CD8-positive, alpha-beta T cell (primary cell): ENCODE measurements at regions of chr6 and their contacts with region 1.

Region 1: DNA sequence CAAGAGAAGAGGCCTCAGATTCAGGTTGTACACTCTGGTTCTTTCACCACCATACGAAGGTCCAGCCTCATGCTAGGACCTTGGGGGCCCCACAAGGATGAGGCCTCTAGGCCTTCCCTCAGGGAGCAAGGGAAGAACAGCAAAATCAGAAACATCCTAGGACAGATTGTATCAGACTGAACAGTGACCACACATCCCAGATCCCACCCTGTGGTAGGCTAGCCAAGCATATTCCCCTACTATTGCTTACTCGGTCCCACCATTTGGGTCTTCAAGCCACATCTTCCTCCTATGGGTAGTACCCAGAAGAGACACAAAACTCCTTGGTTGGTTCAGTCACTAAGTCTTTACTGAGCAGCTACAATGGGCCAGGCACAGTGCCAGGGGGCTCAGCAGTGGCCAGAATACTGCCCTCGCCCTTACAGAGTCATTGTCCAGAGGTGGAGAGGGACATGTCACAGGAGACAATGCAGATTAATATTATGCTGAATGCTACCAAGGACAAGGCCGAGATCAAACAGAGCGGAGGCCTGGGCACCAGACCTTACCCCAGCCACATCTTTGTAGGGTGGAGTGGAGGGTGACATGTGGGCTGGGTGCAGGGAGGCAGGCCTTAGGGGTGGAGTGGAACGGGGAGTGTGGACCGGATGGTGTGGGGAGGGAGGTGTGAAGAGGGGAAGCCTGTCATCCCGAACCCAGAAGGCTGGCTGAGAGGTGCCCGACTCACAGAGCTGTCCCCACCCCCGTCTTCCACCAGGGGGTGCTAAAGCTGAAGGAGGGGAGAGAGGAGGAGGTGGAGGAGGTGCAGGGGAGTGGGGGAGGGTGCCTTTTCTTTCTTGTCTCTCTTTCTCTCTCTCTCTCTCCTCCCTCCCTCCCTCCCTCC is 6.8 kb upstream of the MAPK13 start:
- DNase-seq: peak; percentile 80 to 96 (median 90)
- ATAC-seq: peak; percentile 74
- H3K4me3 ChIP-seq: no peak overlapping the region
- H3K4me3 Mint-ChIP-seq: peak overlapping the region; percentile 54
- H3K27ac ChIP-seq: peak overlapping the region; percentile 38 to 99
- H3K27ac Mint-ChIP-seq: peak overlapping the region; percentile 100
- H3K4me1 ChIP-seq: peaks cover 87% of the 10 kb centered on the region
- H3K4me1 Mint-ChIP-seq: peaks cover 89% of the 10 kb centered on the region
- H3K27me3 ChIP-seq: no peaks in the 10 kb centered on the region
- H3K27me3 Mint-ChIP-seq: no peaks in the 10 kb centered on the region
- CTCF ChIP-seq: peak; percentile 54

Region 2: GRCh38 chr6:36099872-36100483 is 23.5 kb before region 1 on chr6:
- CTCF ChIA-PET with region 1: interaction called, 88 read pairs
- POLR2A ChIA-PET with region 1: interaction called, 12 read pairs
- intact Hi-C with region 1: loop called in 1 of 2 experiments (anchors 1 kb)
- DNase-seq: peak; percentile 29 to 87 (median 56)
- ATAC-seq: peak; percentile 87
- H3K4me3 ChIP-seq: peak overlapping the region in 1 of 2 experiments; percentile 1
- H3K4me3 Mint-ChIP-seq: peak overlapping the region; percentile 64
- H3K27ac ChIP-seq: peak overlapping the region; percentile 46 to 80
- H3K27ac Mint-ChIP-seq: peak overlapping the region; percentile 91
- H3K4me1 ChIP-seq: peaks cover 45% of the 10 kb centered on the region
- H3K4me1 Mint-ChIP-seq: peaks cover 65% of the 10 kb centered on the region
- H3K27me3 ChIP-seq: no peaks in the 10 kb centered on the region
- H3K27me3 Mint-ChIP-seq: no peaks in the 10 kb centered on the region
- CTCF ChIP-seq: no peak

Region 3: DNA sequence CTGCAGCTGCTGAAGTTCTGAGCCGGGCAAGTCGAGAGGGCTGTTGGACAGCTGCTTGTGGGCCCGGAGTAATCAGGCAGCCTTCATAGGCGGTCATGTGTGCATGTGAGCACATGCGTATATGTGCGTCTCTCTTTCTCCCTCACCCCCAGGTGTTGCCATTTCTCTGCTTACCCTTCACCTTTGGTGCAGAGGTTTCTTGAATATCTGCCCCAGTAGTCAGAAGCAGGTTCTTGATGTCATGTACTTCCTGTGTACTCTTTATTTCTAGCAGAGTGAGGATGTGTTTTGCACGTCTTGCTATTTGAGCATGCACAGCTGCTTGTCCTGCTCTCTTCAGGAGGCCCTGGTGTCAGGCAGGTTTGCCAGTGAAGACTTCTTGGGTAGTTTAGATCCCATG is 14.4 kb before region 1 on chr6:
- CTCF ChIA-PET with region 1: interaction called, 58 read pairs
- POLR2A ChIA-PET with region 1: interaction called, 16 read pairs
- intact Hi-C with region 1: loop called in 1 of 2 experiments (anchors 1 kb)
- DNase-seq: peak in 5 of 9 experiments; percentile 44 to 81 (median 66)
- ATAC-seq: peak; percentile 93
- H3K4me3 ChIP-seq: no peak overlapping the region
- H3K4me3 Mint-ChIP-seq: peak overlapping the region; percentile 8
- H3K27ac ChIP-seq: peak overlapping the region; percentile 59 to 60
- H3K27ac Mint-ChIP-seq: peak overlapping the region; percentile 95
- H3K4me1 ChIP-seq: peaks cover 53% of the 10 kb centered on the region
- H3K4me1 Mint-ChIP-seq: peaks cover 60% of the 10 kb centered on the region
- H3K27me3 ChIP-seq: no peaks in the 10 kb centered on the region
- H3K27me3 Mint-ChIP-seq: no peaks in the 10 kb centered on the region
- CTCF ChIP-seq: no peak

Region 4: GRCh38 chr6:36196880-36197548 is 73.5 kb after region 1 on chr6:
- CTCF ChIA-PET with region 1: interaction called, 8 read pairs
- POLR2A ChIA-PET with region 1: interaction called, 15 read pairs
- intact Hi-C with region 1: loop called (anchors 1 kb)
- DNase-seq: peak; percentile 99 to 100 (median 100)
- ATAC-seq: peak; percentile 91
- H3K4me3 ChIP-seq: peak overlapping the region; percentile 61 to 68
- H3K4me3 Mint-ChIP-seq: peak overlapping the region; percentile 88
- H3K27ac ChIP-seq: peak overlapping the region; percentile 74 to 77
- H3K27ac Mint-ChIP-seq: peak overlapping the region; percentile 94
- H3K4me1 ChIP-seq: peaks cover 29% of the 10 kb centered on the region
- H3K4me1 Mint-ChIP-seq: peaks cover 55% of the 10 kb centered on the region
- H3K27me3 ChIP-seq: no peaks in the 10 kb centered on the region
- H3K27me3 Mint-ChIP-seq: no peaks in the 10 kb centered on the region
- CTCF ChIP-seq: no peak

Region 5: DNA sequence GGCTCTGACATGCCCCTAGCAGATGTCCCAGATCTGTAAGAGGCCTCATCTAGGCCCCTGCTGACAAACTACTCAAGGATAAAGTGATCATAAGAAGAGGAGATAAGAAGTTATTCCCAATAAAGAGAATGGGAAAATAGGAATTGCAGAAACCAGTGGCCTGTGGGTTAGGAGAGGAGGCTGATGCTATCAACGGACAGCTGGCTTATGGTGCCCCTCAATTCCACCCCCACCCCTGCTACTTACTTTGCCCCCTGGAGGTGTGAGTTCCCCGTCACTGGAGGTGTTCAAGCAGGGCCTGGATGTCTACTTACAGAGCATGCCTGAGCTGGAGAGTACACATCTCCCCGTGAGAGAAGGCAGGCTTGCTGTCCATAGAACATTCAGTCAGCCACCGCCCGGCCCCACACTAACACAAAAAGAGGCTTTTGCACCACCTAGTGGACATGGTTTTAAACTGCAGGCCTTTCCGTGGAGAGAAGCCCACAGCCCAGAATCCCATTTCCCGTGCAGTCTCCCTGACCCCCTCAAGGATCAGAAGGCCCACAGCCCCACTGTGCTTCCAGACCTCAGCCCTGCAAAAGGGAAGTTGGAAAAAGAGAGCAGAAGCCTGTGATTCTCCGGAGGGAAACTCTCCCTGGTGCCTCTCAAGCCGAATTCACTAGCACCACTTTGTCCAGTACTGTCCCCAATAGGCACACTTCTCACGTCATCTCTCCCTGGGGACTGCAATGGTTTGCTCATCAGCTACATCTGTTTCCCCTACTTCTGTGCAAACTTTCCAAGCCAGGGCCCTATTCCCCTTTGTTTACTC is 236.9 kb after region 1 on chr6:
- CTCF ChIA-PET with region 1: interaction called, 4 read pairs
- POLR2A ChIA-PET with region 1: no interaction called
- intact Hi-C with region 1: loop called in 1 of 2 experiments (anchors 1 kb)
- DNase-seq: peak; percentile 38 to 81 (median 69)
- ATAC-seq: peak; percentile 93
- H3K4me3 ChIP-seq: no peak overlapping the region
- H3K4me3 Mint-ChIP-seq: no peak overlapping the region
- H3K27ac ChIP-seq: no peak overlapping the region
- H3K27ac Mint-ChIP-seq: no peak overlapping the region
- H3K4me1 ChIP-seq: peaks cover 4% of the 10 kb centered on the region
- H3K4me1 Mint-ChIP-seq: peaks cover 11% of the 10 kb centered on the region
- H3K27me3 ChIP-seq: no peaks in the 10 kb centered on the region
- H3K27me3 Mint-ChIP-seq: peaks cover 3% of the 10 kb centered on the region
- CTCF ChIP-seq: peak; percentile 74

Region 6: DNA sequence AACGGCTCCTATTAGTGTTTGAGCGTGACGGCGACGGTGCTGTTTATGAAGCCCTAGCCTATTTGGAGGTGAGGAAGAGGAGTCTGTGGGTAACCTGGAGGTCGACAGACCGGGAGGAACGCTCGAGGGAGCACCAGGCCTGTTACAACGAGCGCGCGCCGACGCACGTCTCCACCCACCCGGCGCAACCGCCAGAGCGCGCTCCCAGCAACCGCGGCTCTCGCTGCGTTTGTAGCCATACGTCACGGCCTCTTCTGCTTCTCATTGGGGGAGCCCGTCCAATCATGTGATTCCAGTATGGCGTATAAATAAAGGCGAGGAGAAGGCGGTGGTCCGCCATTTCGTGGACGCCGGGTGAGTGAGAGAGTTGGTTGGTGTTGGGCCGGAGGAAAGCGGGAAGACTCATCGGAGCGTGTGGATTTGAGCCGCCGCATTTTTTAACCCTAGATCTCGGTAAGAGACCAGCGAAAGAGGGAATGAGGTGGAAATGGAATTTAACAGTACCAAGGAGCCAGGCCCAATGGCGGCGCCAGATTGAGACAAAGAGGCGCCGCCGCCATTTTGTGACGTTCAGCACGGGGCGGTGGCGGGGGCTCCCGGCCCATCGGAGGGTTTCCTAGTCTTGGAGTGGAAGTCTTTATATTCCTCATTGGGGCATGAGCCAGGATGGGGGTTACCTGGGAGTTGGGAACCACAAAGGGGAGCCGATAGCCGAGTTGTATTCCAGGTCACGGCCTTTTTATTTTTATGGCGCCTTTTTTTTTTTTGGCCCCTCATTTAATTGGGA is 470.7 kb after region 1 on chr6 and contains the start of gene SRSF3:
- CTCF ChIA-PET with region 1: no interaction called
- POLR2A ChIA-PET with region 1: no interaction called
- intact Hi-C with region 1: loop called (anchors 10 kb)
- DNase-seq: peak; percentile 90 to 99 (median 94)
- ATAC-seq: peak; percentile 86
- H3K4me3 ChIP-seq: peak within 1 kb of the TSS; percentile 72 to 74
- H3K4me3 Mint-ChIP-seq: peak within 1 kb of the TSS; percentile 97
- H3K27ac ChIP-seq: peak within 1 kb of the TSS; percentile 93 to 95
- H3K27ac Mint-ChIP-seq: peak within 1 kb of the TSS; percentile 99
- H3K4me1 ChIP-seq: peaks cover 42% of the 10 kb centered on the region
- H3K4me1 Mint-ChIP-seq: peaks cover 45% of the 10 kb centered on the region
- H3K27me3 ChIP-seq: no peaks in the 10 kb centered on the region
- H3K27me3 Mint-ChIP-seq: no peaks in the 10 kb centered on the region
- CTCF ChIP-seq: no peak
- total RNA-seq, gene SRSF3: 620 to 627 TPM

Region 7: DNA sequence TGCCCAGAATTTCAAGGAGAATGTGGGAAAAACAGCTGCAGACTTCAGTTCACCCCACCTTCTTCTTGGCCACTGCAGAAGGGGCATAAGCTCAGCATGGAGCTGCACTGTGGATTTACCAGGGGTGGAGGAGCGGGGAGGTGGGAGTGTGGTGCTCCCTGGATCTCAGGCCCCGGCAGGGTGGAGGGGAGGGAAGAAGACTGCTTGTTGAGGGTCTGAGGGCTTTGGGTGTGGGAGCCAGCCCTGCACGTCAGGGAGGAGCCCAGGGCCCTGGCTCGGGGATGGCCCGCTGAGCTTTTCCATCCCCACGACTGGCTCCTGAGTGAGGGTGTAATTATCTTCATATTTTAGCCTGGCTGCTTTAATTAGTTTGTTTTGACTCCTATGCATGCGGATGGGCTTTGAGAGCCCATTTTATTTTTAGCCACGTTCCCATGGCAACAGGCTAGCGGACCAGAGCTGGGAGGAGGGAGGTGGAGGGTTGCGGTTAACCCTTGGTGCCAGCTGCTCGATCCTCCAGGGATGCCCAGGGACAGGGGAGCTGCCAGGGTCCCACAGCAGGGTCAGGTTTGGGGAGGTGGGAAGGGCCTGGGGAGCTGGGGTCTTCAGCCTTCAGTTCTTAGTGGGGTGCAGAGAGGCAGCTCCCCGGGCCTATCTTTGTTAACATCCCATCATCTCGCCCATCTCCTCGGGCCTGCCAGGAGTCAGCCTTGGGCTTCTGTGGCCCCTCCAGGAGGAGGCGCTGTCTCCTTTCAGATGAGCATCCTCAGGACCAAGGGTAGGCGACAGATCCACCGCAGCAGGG is 642.3 kb after region 1 on chr6:
- CTCF ChIA-PET with region 1: no interaction called
- POLR2A ChIA-PET with region 1: no interaction called
- intact Hi-C with region 1: no loop called
- DNase-seq: peak; percentile 65 to 87 (median 80)
- ATAC-seq: peak; percentile 95
- H3K4me3 ChIP-seq: no peak overlapping the region
- H3K4me3 Mint-ChIP-seq: no peak overlapping the region
- H3K27ac ChIP-seq: no peak overlapping the region
- H3K27ac Mint-ChIP-seq: no peak overlapping the region
- H3K4me1 ChIP-seq: peaks cover 42% of the 10 kb centered on the region
- H3K4me1 Mint-ChIP-seq: peaks cover 33% of the 10 kb centered on the region
- H3K27me3 ChIP-seq: no peaks in the 10 kb centered on the region
- H3K27me3 Mint-ChIP-seq: no peaks in the 10 kb centered on the region
- CTCF ChIP-seq: peak; percentile 75